ENCODE measurements at regions of chr16 and their contacts with region 1.

Region 1: GRCh38 chr16:66562407-66562806 is 3.8 kb upstream of the CMTM1 start:
- DNase-seq: peak in 3 of 5 donors; percentile 28 to 42 (median 31)
- H3K4me3 ChIP-seq: no peak overlapping the region
- H3K4me3 Mint-ChIP-seq: peak overlapping the region in 6 of 8 donors; percentile 15 to 86 (median 64)
- H3K27ac ChIP-seq: no peak overlapping the region
- H3K27ac Mint-ChIP-seq: peak overlapping the region; percentile 58 to 80 (median 73)
- H3K4me1 ChIP-seq: peaks cover 73% of the 10 kb centered on the region
- H3K4me1 Mint-ChIP-seq: peaks cover 53 to 74% (median 63%) of the 10 kb centered on the region in 4 donors
- H3K27me3 ChIP-seq: no peaks in the 10 kb centered on the region
- H3K27me3 Mint-ChIP-seq: no peaks in the 10 kb centered on the region

Region 2: DNA sequence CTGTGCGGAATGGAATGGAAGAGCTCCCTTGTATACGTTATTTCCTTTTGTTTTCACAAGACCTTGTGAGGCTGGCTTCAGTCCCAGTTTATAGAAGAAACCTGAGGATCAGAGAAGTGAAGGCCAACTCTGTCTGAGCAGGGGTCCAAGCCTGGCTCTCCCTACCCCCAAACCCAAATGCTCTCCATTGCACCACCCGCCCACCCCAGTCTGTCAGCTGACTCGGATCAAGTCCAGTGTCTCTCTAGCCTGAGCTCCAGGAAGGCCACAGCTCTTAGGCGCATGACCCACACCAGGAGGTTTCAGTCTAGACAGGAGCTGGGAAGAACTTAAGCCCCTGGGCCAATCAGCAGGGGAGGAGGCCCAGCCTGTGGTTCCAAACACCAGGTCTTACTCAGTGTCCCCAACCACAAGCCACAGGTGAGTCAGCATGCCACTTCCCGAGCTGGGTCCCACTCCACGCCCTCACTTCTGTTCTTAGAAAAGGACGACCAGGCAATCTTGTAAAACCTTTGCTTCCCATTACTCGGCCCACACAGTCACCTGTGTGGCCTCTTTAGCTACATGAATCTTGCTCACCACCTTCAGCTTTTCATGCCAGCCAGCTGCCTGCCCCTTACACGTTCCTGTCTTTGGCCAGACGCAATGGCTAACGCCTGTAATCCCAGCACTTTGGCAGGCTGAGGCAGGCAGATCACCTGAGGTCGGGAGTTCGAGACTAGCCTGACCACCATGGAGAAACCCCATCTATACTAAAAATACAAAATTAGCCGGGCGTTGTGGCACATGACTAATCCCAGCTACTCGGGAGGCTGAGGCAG is 40.2 kb before region 1 on chr16:
- CTCF ChIA-PET with region 1: interaction called, 21 read pairs
- POLR2A ChIA-PET with region 1: interaction called, 12 read pairs
- intact Hi-C with region 1: no loop called
- DNase-seq: peak; percentile 71 to 96 (median 77)
- H3K4me3 ChIP-seq: peak overlapping the region; percentile 32 to 57
- H3K4me3 Mint-ChIP-seq: peak overlapping the region; percentile 73 to 86 (median 79)
- H3K27ac ChIP-seq: peak overlapping the region; percentile 51
- H3K27ac Mint-ChIP-seq: peak overlapping the region; percentile 89 to 98 (median 95)
- H3K4me1 ChIP-seq: peaks cover 82% of the 10 kb centered on the region
- H3K4me1 Mint-ChIP-seq: peaks cover 64 to 100% (median 82%) of the 10 kb centered on the region in 4 donors
- H3K27me3 ChIP-seq: no peaks in the 10 kb centered on the region
- H3K27me3 Mint-ChIP-seq: no peaks in the 10 kb centered on the region

Region 3: DNA sequence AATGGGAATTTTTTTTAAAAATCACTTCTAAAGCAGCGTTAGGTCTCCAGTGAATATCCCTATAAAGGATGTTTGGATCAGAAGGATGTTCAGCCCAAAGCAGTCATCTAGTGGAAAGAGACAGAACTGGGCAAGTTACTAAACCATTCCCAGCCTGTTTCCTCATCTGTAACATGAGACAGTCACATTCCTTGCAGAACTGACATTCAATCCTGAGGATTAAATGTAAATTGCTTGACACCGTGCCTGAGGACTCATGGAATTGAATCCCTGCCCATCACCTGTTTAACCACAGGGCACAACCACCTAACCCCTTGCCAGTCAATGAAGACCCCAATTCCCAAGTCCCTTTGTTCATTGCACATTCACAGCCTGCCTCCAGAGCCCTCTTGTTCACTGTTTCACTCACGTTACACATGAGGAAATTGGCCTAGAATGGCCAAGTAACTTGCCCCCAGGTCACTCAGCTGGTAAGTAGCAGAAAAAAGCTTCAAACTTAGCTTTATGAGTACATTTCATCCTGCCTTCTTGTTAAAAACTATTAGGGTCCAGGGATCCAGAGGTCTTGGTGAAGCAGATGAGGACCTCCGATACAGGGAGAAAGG is 18.3 kb after region 1 on chr16:
- CTCF ChIA-PET with region 1: interaction called, 20 read pairs
- POLR2A ChIA-PET with region 1: interaction called, 7 read pairs
- intact Hi-C with region 1: no loop called
- DNase-seq: no peak
- H3K4me3 ChIP-seq: no peak overlapping the region
- H3K4me3 Mint-ChIP-seq: peak overlapping the region in 2 of 8 donors; percentile 1 to 4
- H3K27ac ChIP-seq: no peak overlapping the region
- H3K27ac Mint-ChIP-seq: no peak overlapping the region
- H3K4me1 ChIP-seq: peaks cover 5% of the 10 kb centered on the region
- H3K4me1 Mint-ChIP-seq: peaks cover 4 to 17% (median 9%) of the 10 kb centered on the region in 4 donors
- H3K27me3 ChIP-seq: peaks cover 3% of the 10 kb centered on the region
- H3K27me3 Mint-ChIP-seq: peaks cover 2 to 6% of the 10 kb centered on the region in 2 donors

Region 4: DNA sequence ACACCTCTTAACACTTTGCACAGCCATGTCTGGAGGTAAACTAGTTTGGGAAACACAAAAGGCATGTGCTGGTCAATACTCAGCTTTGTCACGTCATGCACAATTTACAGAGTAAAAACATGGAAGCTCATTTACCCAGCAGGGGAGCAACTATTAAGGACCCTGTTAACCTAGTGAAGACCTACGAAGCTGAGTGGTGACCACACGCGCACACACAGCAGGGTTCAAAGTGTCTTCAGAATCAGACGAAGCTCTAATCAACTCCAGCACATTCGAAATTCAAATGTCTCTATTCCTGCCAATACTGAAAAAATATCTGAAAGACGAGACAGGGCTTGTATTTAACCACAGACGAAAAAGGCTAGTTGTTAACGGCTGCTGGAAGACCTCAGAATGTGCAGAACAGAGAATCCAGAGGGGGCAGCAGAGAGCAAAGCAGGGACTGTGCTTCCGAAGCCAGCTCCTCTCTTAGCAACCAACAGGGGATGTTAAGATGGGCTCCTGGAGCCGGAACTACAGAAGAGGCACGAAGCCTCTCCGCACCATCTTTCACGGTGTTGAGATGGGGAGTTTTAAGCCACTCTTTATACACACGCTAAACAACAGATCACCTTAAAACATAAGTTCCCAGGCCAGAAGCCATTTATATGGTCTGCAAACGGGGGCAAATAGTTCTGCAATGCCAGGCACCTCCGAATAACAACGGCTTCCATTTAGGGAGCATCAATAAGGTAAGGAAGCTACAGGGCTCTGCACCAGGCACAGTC is 88.5 kb after region 1 on chr16:
- CTCF ChIA-PET with region 1: interaction called, 17 read pairs
- POLR2A ChIA-PET with region 1: no interaction called
- intact Hi-C with region 1: loop called (anchors 2 kb)
- DNase-seq: peak; percentile 75 to 84 (median 80)
- H3K4me3 ChIP-seq: peak overlapping the region in 1 of 2 donors; percentile 25
- H3K4me3 Mint-ChIP-seq: peak overlapping the region; percentile 50 to 90 (median 74)
- H3K27ac ChIP-seq: no peak overlapping the region
- H3K27ac Mint-ChIP-seq: peak overlapping the region in 6 of 7 donors; percentile 2 to 90 (median 60)
- H3K4me1 ChIP-seq: peaks cover 6% of the 10 kb centered on the region
- H3K4me1 Mint-ChIP-seq: peaks cover 6 to 11% (median 10%) of the 10 kb centered on the region in 4 donors
- H3K27me3 ChIP-seq: no peaks in the 10 kb centered on the region
- H3K27me3 Mint-ChIP-seq: peaks cover 0 to 6% of the 10 kb centered on the region in 2 donors

Region 5: GRCh38 chr16:66740010-66740409 is 177.6 kb after region 1 on chr16:
- CTCF ChIA-PET with region 1: interaction called, 9 read pairs
- POLR2A ChIA-PET with region 1: no interaction called
- intact Hi-C with region 1: loop called (anchors 1 kb)
- DNase-seq: peak in 4 of 5 donors; percentile 14 to 31 (median 28)
- H3K4me3 ChIP-seq: no peak overlapping the region
- H3K4me3 Mint-ChIP-seq: peak overlapping the region in 1 of 8 donors; percentile 47
- H3K27ac ChIP-seq: no peak overlapping the region
- H3K27ac Mint-ChIP-seq: peak overlapping the region in 5 of 7 donors; percentile 30 to 77 (median 49)
- H3K4me1 ChIP-seq: peaks cover 18% of the 10 kb centered on the region
- H3K4me1 Mint-ChIP-seq: peaks cover 13 to 24% (median 16%) of the 10 kb centered on the region in 4 donors
- H3K27me3 ChIP-seq: no peaks in the 10 kb centered on the region
- H3K27me3 Mint-ChIP-seq: no peaks in the 10 kb centered on the region